PC-3 (cell line): ENCODE measurements at regions of chr13 and their contacts with region 1.

Region 1: DNA sequence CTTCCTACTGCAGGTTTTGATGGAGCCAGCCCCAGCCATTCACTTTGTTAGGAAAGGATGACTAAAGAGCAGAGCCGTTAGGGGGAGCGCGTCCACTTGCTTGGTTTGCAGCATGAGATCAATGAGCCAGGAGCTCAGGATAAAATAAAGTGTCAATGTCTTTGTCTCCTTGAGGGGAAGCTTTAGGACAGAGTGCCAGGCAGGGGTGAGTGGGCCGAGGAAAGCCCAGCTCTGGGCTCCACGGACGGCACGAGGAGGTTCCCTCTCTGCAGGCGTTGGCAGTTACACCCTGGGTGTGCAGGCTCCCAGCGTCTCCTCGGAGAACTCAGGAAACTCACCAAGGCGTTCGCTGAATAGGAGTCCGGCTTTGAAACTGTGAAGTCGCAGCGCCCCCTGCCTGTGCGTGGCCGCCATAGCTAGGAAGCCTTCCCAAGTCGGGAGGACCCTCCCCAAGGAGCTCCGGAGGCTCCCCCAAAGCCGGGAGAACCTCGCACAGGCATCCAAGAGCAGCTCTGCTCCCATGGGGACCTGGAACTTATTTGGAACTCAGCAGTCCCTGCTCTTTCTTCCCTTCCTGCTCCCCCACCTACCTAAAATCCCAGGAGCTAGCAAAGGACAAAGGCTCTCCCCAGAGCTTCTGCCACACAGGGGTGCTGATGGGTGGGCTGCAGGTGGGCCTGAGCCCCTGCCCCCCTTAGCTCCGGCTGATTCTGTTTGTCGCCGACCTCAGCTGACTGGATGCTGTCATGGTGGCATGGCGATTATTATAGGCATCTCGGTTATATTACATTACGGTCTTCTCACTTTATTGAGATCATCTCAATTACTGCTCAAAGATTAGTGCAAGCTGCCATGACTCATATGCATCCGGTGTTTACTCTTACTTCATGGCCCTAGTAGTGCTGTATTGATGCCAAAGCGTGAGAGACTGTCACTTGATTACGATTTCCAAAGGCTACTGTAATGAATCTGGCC is 34.4 kb downstream of the GSX1 start:
- DNase-seq: peak; percentile 85
- ATAC-seq: peak; percentile 86
- H3K4me3 ChIP-seq: peak overlapping the region; percentile 67
- H3K27ac ChIP-seq: no peak overlapping the region
- H3K4me1 ChIP-seq: peaks cover 8% of the 10 kb centered on the region
- H3K27me3 ChIP-seq: peaks cover 37% of the 10 kb centered on the region
- CTCF ChIP-seq: peak; percentile 91

Region 2: DNA sequence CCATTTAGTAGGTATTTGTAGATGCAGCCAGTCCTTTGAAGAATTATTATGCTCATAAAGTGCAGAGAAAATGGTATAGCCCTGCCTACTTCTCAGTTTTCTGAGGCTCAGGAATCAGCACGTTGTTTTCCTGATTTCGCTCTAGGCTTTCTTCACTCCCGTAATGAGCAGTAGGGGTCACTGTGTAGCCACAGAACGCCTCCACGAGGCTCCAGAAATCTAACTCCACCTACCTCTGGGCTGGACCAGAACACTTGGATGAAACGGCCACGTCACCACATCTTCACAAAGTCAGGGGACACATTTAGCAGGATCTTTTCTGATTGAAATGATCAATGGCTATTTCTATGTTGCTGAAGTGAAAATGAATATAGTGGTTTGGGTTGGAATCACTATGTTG is 452.0 kb before region 1 on chr13:
- CTCF ChIA-PET with region 1: interaction called, 5 read pairs
- POLR2A ChIA-PET with region 1: no interaction called
- intact Hi-C with region 1: loop called (anchors 1 kb)
- DNase-seq: peak; percentile 89
- ATAC-seq: peak; percentile 84
- H3K4me3 ChIP-seq: peak overlapping the region; percentile 56
- H3K27ac ChIP-seq: peak overlapping the region; percentile 91
- H3K4me1 ChIP-seq: peaks cover 19% of the 10 kb centered on the region
- H3K27me3 ChIP-seq: no peaks in the 10 kb centered on the region
- CTCF ChIP-seq: peak; percentile 85

Region 3: GRCh38 chr13:27533155-27533643 is 293.5 kb before region 1 on chr13:
- CTCF ChIA-PET with region 1: interaction called, 12 read pairs
- POLR2A ChIA-PET with region 1: no interaction called
- intact Hi-C with region 1: loop called (anchors 1 kb)
- DNase-seq: peak; percentile 80
- ATAC-seq: peak; percentile 99
- H3K4me3 ChIP-seq: peak overlapping the region; percentile 53; the same call in 1 of the 2 replicates
- H3K27ac ChIP-seq: no peak overlapping the region
- H3K4me1 ChIP-seq: no peaks in the 10 kb centered on the region
- H3K27me3 ChIP-seq: no peaks in the 10 kb centered on the region
- CTCF ChIP-seq: peak; percentile 92

Region 4: GRCh38 chr13:27620377-27621115 is 206.1 kb before region 1 on chr13 and contains the start of gene LNX2:
- CTCF ChIA-PET with region 1: interaction called, 3 read pairs
- POLR2A ChIA-PET with region 1: no interaction called
- intact Hi-C with region 1: loop called (anchors 2 kb)
- DNase-seq: peak; percentile 93
- ATAC-seq: peak; percentile 86
- H3K4me3 ChIP-seq: peak within 1 kb of the TSS; percentile 94
- H3K27ac ChIP-seq: peak within 1 kb of the TSS; percentile 84
- H3K4me1 ChIP-seq: peaks cover 35% of the 10 kb centered on the region
- H3K27me3 ChIP-seq: no peaks in the 10 kb centered on the region
- CTCF ChIP-seq: no peak
- total RNA-seq, gene LNX2: 5.8 and 6.0 TPM in 2 replicates

Region 5: DNA sequence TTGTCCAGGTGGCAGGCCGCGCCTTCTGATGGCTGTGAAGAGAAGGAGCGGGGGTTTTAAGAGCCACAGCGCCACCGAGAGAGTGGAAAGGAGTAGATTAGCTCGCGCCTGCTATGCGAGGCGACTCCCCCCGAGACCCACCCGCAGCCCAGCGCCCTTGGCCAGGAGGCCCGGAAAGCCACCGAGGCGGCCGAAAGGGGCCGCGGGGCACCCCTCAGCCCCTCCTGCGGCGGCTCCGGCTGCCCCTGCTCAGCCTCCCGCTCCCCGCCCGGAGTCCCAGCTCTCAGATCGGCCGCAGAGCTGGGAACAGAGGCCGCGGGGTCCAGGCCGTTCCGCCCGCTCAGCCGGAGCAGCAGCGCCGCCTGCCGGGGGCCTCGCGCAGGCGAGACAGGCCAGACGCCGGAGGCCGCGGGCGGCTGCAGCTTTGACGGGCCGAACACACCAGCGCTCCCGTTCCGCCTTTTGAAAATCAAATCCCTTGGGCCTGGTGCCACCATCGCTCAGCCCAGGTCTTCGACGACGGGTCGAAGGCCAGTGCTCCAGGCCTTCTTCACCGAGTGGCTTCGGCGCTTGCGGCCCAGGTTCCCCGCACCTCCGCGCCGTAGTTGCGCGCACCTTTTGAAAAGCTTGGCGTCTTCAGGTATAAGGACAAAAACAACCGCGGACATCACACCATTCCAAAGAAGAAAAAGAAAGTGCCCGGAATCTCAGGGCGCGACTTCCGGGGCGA is 127.2 kb after region 1 on chr13:
- CTCF ChIA-PET with region 1: interaction called, 35 read pairs
- POLR2A ChIA-PET with region 1: no interaction called
- intact Hi-C with region 1: loop called (anchors 1 kb)
- DNase-seq: peak; percentile 79
- ATAC-seq: peak; percentile 97
- H3K4me3 ChIP-seq: peak overlapping the region; percentile 74
- H3K27ac ChIP-seq: peak overlapping the region; percentile 38
- H3K4me1 ChIP-seq: peaks cover 19% of the 10 kb centered on the region
- H3K27me3 ChIP-seq: no peaks in the 10 kb centered on the region
- CTCF ChIP-seq: peak; percentile 74

Region 6: DNA sequence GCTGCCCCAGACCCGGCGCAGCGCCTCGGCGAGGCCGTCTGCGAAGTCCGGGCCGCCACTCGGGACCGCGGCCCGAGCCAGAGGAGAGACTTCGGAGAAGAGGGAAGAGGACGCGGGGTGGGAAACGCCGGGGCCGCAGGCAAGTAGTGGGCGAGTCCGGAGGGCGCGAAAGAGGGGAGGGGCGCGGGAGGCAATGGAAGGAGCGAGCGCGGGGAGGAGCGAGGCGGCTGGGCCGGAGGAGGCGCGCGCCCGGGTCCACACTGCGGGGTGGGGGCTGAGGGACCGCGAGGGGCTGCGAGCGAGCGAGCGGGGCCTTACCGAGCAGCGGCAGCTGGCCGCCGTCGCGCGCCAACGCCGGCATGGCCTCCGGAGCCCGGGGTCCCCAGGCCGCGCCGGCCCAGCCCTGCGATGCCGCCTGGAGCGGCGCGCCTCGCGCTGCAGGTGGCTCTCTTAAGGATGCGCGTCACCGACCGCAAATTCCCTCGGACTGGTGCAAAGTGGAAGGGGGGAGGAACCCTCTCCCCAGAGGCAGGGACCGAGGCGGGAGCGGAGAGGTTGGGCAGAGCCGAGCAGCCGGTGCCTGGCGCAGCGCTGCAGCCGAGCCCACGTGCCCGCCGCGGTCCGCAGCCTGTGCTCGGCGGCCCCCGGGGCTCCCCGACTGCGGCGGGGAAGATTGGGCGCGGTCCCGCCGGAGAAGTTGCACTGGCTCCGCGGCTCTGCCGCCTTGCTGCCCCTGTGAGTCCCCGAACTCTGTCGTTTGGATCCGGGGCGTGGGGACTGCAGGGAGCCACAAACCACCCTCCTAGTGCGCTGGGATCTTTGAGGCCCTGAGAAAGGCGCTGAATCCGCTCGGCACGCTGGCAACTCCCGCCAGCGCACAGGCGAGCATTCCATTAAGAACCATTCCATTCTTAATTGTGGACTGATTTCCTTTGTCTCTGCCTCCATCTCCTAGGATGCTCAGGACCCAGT is 273.8 kb after region 1 on chr13 and contains the start of gene FLT3:
- CTCF ChIA-PET with region 1: no interaction called
- POLR2A ChIA-PET with region 1: no interaction called
- intact Hi-C with region 1: no loop called
- DNase-seq: peak; percentile 32
- ATAC-seq: peak; percentile 38; the same call in 1 of the 2 replicates
- H3K4me3 ChIP-seq: no peak within 1 kb of the TSS
- H3K27ac ChIP-seq: no peak within 1 kb of the TSS
- H3K4me1 ChIP-seq: no peaks in the 10 kb centered on the region
- H3K27me3 ChIP-seq: peaks cover 61% of the 10 kb centered on the region
- CTCF ChIP-seq: no peak
- total RNA-seq, gene FLT3: not detected in 2 replicates